HEK293T (cell line): ENCODE measurements at regions of chr1 and their contacts with region 1.

Region 1: GRCh38 chr1:46603858-46604549 is at the start of gene MKNK1:
- DNase-seq: peak; percentile 100

Region 2: DNA sequence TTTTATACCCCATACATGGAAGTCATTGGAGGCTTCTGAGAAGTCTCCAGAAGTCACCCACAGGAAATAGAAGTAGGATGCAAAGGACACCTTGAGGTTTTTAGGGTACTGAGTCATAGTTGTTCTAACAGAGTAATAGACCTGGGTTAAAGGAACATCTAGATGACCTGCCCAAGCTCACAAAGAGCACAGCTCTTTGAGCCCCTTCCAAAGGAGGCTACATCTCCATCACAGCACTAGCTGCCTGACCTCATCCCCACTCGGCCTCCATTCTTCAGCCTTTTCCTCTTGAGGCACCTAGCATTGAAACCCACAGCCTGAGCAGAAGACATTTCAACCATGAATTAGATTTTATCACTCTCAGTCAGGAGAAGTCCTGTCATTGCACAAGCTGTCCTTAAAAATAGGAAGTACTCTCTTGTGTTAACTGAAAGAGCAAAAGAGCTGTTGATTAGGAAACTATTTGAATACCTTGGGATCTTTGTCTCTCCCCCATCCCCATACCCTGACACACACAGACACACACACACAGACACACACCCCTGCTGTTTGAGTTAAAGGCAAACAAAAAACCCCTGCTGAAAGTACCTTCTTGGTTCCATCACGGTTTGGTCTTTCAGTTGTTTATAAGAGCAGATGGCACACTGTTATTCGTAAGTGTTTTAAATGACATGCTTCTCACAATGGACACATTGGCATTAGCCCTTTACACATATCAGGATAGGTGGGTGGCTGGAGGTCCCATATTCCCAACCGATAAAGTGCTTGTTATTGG is 22.1 kb before region 1 on chr1:
- CTCF ChIA-PET with region 1: interaction called, 3 read pairs
- POLR2A ChIA-PET with region 1: interaction called, 10 read pairs
- DNase-seq: no peak

Region 3: DNA sequence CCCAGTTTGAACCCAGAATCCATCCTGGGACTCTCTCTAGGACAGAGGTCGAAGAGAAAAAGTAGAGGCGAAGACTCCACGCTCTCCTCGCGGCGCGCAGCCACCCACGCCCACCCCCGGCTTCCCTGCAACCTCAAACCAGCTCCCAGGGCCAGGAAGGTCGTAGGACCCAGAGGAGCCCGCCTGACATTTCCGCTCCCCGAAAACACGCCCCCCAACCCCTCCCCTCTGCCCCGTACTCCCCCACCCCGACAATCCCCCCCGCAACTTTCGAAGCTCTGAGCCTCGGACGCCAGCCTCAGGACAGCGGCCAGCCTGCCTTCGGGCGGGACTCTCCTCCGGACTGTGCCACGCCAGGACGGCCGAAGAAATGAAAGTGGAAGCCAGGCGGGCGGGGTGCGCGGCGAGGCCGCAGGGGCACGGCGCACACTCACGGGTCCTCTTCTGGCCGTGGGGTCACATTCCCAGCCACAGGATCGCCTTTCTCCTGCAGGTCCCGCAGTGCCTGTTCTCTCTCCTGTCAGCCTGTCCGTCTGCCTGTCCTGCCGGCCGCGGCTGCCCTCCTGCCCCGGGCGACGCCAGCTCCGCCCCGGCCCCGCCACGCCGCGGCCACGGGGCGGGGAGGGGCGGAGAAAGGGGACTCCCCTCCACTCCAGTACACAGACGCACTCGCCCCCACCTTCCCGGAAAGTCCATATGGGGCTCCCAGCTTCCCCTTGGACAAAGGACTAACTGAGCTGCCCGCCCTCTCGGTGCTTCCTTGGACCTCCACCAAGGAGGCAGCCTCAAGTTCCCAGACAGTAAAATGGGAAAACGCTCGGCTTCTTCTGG is 12.5 kb after region 1 on chr1 and contains the start of gene MOB3C:
- CTCF ChIA-PET with region 1: interaction called, 8 read pairs
- POLR2A ChIA-PET with region 1: interaction called, 101 read pairs
- DNase-seq: peak; percentile 33

Region 4: GRCh38 chr1:46622344-46622743 is 18.3 kb after region 1 on chr1:
- CTCF ChIA-PET with region 1: interaction called, 8 read pairs
- POLR2A ChIA-PET with region 1: interaction called, 101 read pairs
- DNase-seq: peak; percentile 61